ENCODE measurements at regions of chr1 and their contacts with region 1.

Region 1: GRCh38 chr1:200971955-200972711 is 51.4 kb downstream of the KIF21B start:
- DNase-seq: peak; percentile 70
- H3K4me3 Mint-ChIP-seq: no peak overlapping the region
- H3K27ac Mint-ChIP-seq: no peak overlapping the region
- H3K4me1 Mint-ChIP-seq: no peaks in the 10 kb centered on the region
- H3K27me3 Mint-ChIP-seq: no peaks in the 10 kb centered on the region

Region 2: GRCh38 chr1:200530623-200531261 is 441.4 kb before region 1 on chr1:
- CTCF ChIA-PET with region 1: interaction called, 10 read pairs
- DNase-seq: peak; percentile 83
- H3K4me3 Mint-ChIP-seq: peak overlapping the region; percentile 62
- H3K27ac Mint-ChIP-seq: peak overlapping the region; percentile 94
- H3K4me1 Mint-ChIP-seq: peaks cover 38% of the 10 kb centered on the region
- H3K27me3 Mint-ChIP-seq: peaks cover 7% of the 10 kb centered on the region

Region 3: GRCh38 chr1:201016211-201016651 is 44.1 kb after region 1 on chr1:
- CTCF ChIA-PET with region 1: interaction called, 20 read pairs
- DNase-seq: no peak
- H3K4me3 Mint-ChIP-seq: peak overlapping the region; percentile 59
- H3K27ac Mint-ChIP-seq: peak overlapping the region; percentile 100
- H3K4me1 Mint-ChIP-seq: peaks cover 97% of the 10 kb centered on the region
- H3K27me3 Mint-ChIP-seq: no peaks in the 10 kb centered on the region

Region 4: DNA sequence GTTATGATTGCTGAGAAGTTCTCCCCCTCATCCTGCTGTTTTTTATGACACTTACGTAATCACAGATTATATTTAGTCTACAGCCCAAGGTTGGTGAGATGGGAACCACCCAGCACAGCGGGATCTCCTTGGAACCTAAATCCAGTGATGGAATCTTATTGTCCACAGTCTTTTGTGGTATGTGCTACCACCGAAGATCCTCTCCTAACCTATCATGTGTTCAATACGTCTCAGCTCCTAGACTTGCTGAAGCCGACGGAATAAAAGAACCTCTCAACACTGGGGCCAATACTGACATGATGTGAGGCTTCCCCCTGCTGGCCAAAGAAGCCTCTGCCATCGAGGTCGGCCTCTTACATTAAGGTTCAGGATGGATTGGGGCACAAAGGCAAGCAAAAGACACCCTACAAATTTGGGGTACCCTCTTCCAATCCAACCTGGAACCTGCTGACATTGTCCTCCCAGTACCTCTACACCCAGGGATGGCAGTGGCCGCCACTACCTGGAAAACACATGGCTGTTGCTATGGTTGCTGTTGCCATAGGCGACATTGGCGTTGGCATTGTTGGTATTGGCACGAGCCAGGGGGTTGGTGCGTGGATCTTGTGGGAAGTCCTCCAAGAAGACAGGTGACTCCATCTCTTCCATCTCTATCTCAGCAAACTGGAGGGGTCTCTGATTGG is 70.8 kb after region 1 on chr1:
- CTCF ChIA-PET with region 1: interaction called, 101 read pairs
- DNase-seq: peak; percentile 83
- H3K4me3 Mint-ChIP-seq: no peak overlapping the region
- H3K27ac Mint-ChIP-seq: no peak overlapping the region
- H3K4me1 Mint-ChIP-seq: peaks cover 2% of the 10 kb centered on the region
- H3K27me3 Mint-ChIP-seq: peaks cover 44% of the 10 kb centered on the region

Region 5: GRCh38 chr1:201114236-201115131 is 142.4 kb after region 1 on chr1:
- CTCF ChIA-PET with region 1: interaction called, 40 read pairs
- DNase-seq: peak; percentile 81
- H3K4me3 Mint-ChIP-seq: peak overlapping the region; percentile 77
- H3K27ac Mint-ChIP-seq: no peak overlapping the region
- H3K4me1 Mint-ChIP-seq: peaks cover 7% of the 10 kb centered on the region
- H3K27me3 Mint-ChIP-seq: peaks cover 72% of the 10 kb centered on the region

Measured in activated naive CD4-positive, alpha-beta T cell treated with anti-CD3 and anti-CD28 coated beads, Interleukin-2, amount 10 ng/mL, durations not matched to agents 7 days and 5 days (primary cell).